Gastrocnemius medialis (tissue), 4 donors: ENCODE measurements at regions of chr10 and their contacts with region 1.

Region 1: GRCh38 chr10:19412531-19412930 is 363.9 kb downstream of the MALRD1 start:
- DNase-seq: no peak
- ATAC-seq: peak in 1 of 2 donors; percentile 52
- H3K4me3 ChIP-seq: no peak overlapping the region
- H3K27ac ChIP-seq: no peak overlapping the region
- H3K4me1 ChIP-seq: no peaks in the 10 kb centered on the region
- H3K27me3 ChIP-seq: no peaks in the 10 kb centered on the region
- CTCF ChIP-seq: peak in 4 of 5 experiments; percentile 32 to 52 (median 40)
- POLR2A ChIP-seq: no peak

Region 2: GRCh38 chr10:19178682-19179357 is 233.7 kb before region 1 on chr10:
- in situ Hi-C with region 1: no loop called
- intact Hi-C with region 1: no loop called
- DNase-seq: no peak
- ATAC-seq: no peak
- H3K4me3 ChIP-seq: no peak overlapping the region
- H3K27ac ChIP-seq: no peak overlapping the region
- H3K4me1 ChIP-seq: no peaks in the 10 kb centered on the region
- H3K27me3 ChIP-seq: no peaks in the 10 kb centered on the region
- CTCF ChIP-seq: no peak
- POLR2A ChIP-seq: no peak

Region 3: DNA sequence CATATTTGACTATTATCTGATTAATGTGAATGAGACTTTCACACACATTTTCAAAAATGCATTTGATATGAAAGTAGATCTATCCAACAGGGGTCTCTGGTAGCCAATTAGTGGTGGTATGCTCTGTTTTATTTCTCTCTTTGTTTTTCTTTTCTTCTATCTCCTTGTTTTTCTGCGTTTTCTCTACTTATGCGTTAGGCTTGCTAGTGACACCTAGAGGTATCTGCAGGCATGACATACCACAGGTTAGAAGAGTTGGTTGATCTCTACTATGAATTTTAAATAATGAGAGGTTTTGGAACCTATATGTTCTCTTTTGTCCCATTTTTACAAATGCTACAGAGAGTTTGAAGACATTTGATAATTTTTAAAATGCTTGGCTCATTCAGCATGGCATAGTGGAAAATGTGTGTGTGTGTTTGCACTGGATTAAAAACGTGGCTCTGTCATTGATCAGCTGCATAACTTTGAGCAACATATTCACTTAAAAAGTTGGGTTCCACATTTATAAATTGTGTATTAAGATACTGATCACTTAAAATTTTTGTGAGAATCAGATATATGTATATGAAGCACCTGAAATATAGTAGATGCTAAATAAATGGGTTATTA is 375.6 kb after region 1 on chr10:
- in situ Hi-C with region 1: loop called in 2 of 4 experiments (anchors 10 to 25 kb)
- intact Hi-C with region 1: loop called (anchors 1 kb)
- DNase-seq: no peak
- ATAC-seq: peak in 1 of 2 donors; percentile 58
- H3K4me3 ChIP-seq: peak overlapping the region in 1 of 4 donors; percentile 34
- H3K27ac ChIP-seq: no peak overlapping the region
- H3K4me1 ChIP-seq: no peaks in the 10 kb centered on the region
- H3K27me3 ChIP-seq: no peaks in the 10 kb centered on the region
- CTCF ChIP-seq: peak in 4 of 5 experiments; percentile 26 to 77 (median 65)
- POLR2A ChIP-seq: no peak

Region 4: DNA sequence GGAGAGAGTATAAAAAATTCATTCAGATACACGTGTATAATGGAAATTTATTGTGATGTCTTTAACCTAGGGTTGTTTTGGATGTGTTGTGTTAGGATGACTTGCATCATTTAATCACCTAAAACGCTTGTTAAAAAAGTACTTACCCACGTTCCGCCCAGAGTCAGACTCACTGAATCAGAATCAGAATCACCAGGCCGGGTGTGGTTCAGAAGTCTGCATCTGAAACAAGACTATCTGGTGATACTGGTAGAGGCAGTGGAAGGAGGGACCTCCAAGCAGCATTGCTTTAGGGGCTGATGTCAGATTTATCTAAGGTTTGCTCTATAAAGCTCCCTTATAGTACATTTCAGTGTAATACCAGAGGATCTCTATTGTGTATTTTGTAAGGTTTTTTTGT is 383.2 kb after region 1 on chr10:
- in situ Hi-C with region 1: loop called in 2 of 4 experiments (anchors 5 to 25 kb)
- intact Hi-C with region 1: no loop called
- DNase-seq: no peak
- ATAC-seq: no peak
- H3K4me3 ChIP-seq: no peak overlapping the region
- H3K27ac ChIP-seq: no peak overlapping the region
- H3K4me1 ChIP-seq: no peaks in the 10 kb centered on the region
- H3K27me3 ChIP-seq: no peaks in the 10 kb centered on the region
- CTCF ChIP-seq: no peak
- POLR2A ChIP-seq: no peak

Region 5: DNA sequence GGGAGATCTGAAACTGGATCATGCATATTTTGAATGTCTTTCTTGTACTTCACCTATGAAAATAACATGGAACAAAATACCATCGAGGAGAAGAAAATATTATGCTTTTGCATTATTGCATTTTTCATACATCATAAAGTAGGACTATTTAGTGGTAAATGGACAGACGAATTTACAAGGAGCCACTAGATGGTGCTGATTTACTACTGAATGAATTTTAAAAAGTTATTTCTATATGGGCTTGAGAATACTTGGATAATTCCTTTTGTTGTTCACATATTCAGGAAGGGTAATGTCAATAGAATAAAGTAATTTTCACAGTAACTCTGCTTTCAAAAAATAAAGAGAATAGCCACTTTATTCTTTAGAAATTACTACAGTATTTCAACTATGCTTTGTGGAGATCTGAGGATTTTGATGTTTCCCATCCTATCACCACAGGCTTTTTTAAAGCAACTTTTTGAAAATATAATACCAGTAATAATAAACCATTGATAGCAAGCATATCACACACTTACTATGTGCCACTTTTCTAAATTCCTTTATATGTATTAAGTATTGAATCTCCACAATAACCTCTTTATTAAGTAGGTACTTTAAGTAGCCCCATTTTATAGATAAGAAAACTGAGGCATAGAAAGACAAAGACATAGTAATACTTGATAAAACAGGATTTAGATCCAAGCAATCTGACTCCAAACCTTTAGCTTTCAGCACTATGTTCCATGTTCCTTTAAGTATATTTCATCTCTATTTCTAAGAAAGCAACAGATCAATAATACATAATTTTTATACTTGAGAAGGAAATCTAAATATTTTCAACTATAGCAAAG is 1446.0 kb after region 1 on chr10:
- in situ Hi-C with region 1: loop called in 2 of 4 experiments (anchors 25 kb)
- intact Hi-C with region 1: no loop called
- DNase-seq: no peak
- ATAC-seq: no peak
- H3K4me3 ChIP-seq: no peak overlapping the region
- H3K27ac ChIP-seq: no peak overlapping the region
- H3K4me1 ChIP-seq: no peaks in the 10 kb centered on the region
- H3K27me3 ChIP-seq: no peaks in the 10 kb centered on the region
- CTCF ChIP-seq: no peak
- POLR2A ChIP-seq: no peak